Right cardiac atrium (tissue), 5 donors: ENCODE measurements at regions of chr14 and their contacts with region 1.

Region 1: GRCh38 chr14:22314181-22314820 is 274.7 kb downstream of the DAD1 start:
- DNase-seq: no peak
- ATAC-seq: peak; percentile 56 to 76
- H3K4me3 ChIP-seq: no peak overlapping the region
- H3K27ac ChIP-seq: no peak overlapping the region
- H3K4me1 ChIP-seq: peaks cover 1% of the 10 kb centered on the region
- H3K27me3 ChIP-seq: no peaks in the 10 kb centered on the region

Region 2: GRCh38 chr14:22375321-22375930 is 61.1 kb after region 1 on chr14:
- intact Hi-C with region 1: loop called in 3 of 4 experiments (anchors 2 to 5 kb)
- DNase-seq: no peak
- ATAC-seq: no peak
- H3K4me3 ChIP-seq: no peak overlapping the region
- H3K27ac ChIP-seq: no peak overlapping the region
- H3K4me1 ChIP-seq: no peaks in the 10 kb centered on the region
- H3K27me3 ChIP-seq: no peaks in the 10 kb centered on the region